Natural killer cell (primary cell): ENCODE measurements at regions of chr14 and their contacts with region 1.

Region 1: GRCh38 chr14:72451054-72451972 is 442.6 kb downstream of the DPF3 start:
- DNase-seq: peak; percentile 40 to 71
- ATAC-seq: peak; percentile 79 to 90 (median 85)
- H3K4me3 ChIP-seq: peak overlapping the region; percentile 3
- H3K4me3 Mint-ChIP-seq: peak overlapping the region; percentile 73
- H3K27ac ChIP-seq: peak overlapping the region; percentile 77
- H3K27ac Mint-ChIP-seq: peak overlapping the region; percentile 90 to 95
- H3K4me1 ChIP-seq: peaks cover 33% of the 10 kb centered on the region
- H3K4me1 Mint-ChIP-seq: peaks cover 36 to 37% of the 10 kb centered on the region in 2 donors
- H3K27me3 ChIP-seq: no peaks in the 10 kb centered on the region
- H3K27me3 Mint-ChIP-seq: no peaks in the 10 kb centered on the region
- CTCF ChIP-seq: no peak

Region 2: GRCh38 chr14:72420725-72421474 is 30.4 kb before region 1 on chr14:
- intact Hi-C with region 1: no loop called
- DNase-seq: peak; percentile 66 to 72
- ATAC-seq: peak; percentile 62 to 79 (median 63)
- H3K4me3 ChIP-seq: no peak overlapping the region
- H3K4me3 Mint-ChIP-seq: no peak overlapping the region
- H3K27ac ChIP-seq: no peak overlapping the region
- H3K27ac Mint-ChIP-seq: no peak overlapping the region
- H3K4me1 ChIP-seq: peaks cover 4% of the 10 kb centered on the region
- H3K4me1 Mint-ChIP-seq: peaks cover 5 to 13% of the 10 kb centered on the region in 2 donors
- H3K27me3 ChIP-seq: no peaks in the 10 kb centered on the region
- H3K27me3 Mint-ChIP-seq: peaks cover 0 to 2% of the 10 kb centered on the region in 2 donors
- CTCF ChIP-seq: peak; percentile 99

Region 3: DNA sequence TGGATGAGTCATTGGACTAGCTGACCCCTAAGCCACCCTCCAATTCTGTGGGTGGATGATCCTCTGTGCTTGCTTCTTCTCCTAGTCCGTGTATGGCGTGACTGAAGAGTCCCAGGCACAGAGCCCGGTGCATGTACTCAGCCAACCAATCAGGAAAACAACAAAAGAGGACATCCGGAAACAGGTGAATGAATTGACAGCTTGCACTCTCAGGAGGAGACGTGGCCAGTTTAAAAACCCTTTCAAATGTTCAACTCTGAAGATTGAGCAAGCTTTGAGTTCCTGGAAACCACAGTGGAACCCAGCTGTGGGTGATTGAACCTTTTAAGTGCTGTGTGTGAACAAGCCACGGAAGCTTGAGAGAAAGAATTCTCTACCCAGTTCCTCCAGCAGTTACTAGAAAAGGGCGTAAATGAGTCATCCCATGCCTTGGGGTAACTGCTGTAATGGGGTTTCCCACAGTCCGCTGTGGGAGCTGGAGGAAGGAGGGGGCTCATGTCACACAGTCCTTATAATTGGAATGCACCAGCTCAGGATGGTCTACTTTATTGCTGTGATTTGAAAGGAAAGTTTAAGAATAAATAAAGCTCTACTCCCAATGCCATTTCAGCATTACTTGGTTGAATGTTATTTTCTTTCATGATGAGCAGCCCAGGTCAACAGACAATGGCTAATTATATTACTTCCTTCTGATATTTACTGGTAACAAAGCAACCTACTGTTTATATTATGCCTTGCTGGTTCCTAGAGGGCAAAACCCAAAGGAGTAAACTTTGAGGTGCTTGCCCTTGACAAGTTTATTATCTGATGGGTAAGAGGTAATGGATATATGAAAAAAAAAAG is 25.6 kb after region 1 on chr14:
- intact Hi-C with region 1: loop called (anchors 1 kb)
- DNase-seq: peak; percentile 46 to 66
- ATAC-seq: peak; percentile 84 to 90 (median 87)
- H3K4me3 ChIP-seq: peak overlapping the region; percentile 4
- H3K4me3 Mint-ChIP-seq: peak overlapping the region; percentile 78
- H3K27ac ChIP-seq: peak overlapping the region; percentile 65
- H3K27ac Mint-ChIP-seq: peak overlapping the region; percentile 82 to 88
- H3K4me1 ChIP-seq: peaks cover 44% of the 10 kb centered on the region
- H3K4me1 Mint-ChIP-seq: peaks cover 55 to 57% of the 10 kb centered on the region in 2 donors
- H3K27me3 ChIP-seq: no peaks in the 10 kb centered on the region
- H3K27me3 Mint-ChIP-seq: peaks cover 0 to 7% of the 10 kb centered on the region in 2 donors
- CTCF ChIP-seq: no peak